ENCODE measurements at regions of chr4 and their contacts with region 1.

Region 1: DNA sequence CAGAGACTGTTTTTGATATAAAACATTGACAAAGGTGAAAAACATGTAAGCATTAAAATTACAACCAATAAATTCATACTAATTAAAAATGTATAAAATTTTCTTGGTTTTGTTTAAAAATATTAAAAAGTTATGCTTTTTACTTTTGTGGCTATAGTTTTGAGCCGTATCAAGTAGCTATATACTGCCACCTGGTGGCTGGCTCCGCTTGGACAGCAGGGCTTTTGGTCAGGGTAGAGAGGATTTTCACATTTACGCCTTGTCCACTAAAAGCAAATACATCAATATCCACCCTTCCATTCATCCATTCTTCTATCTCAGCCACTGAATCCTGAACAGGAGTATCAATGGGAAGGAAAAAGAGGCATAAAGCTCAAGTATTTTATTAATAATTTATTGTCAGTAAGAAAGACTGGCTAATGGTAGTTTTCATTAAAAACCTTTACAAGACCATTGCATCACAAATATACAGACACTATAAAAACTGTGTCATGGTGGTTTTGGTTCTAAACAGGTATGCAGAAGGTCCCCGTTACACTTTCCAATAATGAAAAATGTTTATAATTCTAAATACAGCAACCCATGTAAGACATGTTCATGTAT is 32.1 kb upstream of the MTNR1A start:
- DNase-seq: peak; percentile 66 to 80 (median 70)
- H3K4me3 ChIP-seq: no peak overlapping the region
- H3K27ac ChIP-seq: no peak overlapping the region
- H3K4me1 ChIP-seq: no peaks in the 10 kb centered on the region
- H3K27me3 ChIP-seq: no peaks in the 10 kb centered on the region
- CTCF ChIP-seq: peak; percentile 87

Region 2: DNA sequence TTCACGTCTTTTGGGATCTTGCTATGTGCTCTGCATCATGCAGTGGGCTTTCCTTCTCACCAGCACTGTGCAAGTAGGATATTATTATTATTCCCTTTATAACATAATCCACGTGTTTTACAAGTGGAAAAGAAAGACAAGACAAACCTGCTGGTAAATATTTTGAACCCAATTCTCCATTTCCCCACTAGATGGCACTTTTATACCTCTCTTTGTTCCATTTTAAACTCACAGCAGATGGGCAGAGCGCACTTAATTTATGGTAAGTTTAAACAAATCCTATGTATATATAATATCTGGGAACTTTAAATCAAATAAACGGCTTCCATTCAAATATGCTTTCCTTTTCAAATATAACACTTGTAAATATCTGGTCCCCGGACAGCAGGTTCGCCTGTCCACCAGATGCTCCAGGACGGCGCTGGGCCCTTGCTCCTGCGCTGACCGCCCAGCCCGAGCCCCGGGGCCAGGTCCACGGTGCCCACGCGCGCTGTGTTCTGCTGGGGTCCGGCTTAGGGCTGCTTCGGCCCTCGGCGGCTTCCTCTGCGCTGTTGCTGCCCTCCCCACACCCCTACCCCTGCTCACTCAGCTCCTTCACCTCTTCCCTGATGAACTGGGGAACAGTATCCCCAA is 290.4 kb before region 1 on chr4:
- intact Hi-C with region 1: loop called (anchors 5 kb)
- DNase-seq: peak in 3 of 5 donors; percentile 42 to 83 (median 79)
- H3K4me3 ChIP-seq: no peak overlapping the region
- H3K27ac ChIP-seq: no peak overlapping the region
- H3K4me1 ChIP-seq: peaks cover 0 to 3% (median 0%) of the 10 kb centered on the region in 3 donors
- H3K27me3 ChIP-seq: peaks cover 2% of the 10 kb centered on the region
- CTCF ChIP-seq: peak; percentile 48